Naive thymus-derived CD4-positive, alpha-beta T cell (primary cell): ENCODE measurements at regions of chr1 and their contacts with region 1.

Region 1: GRCh38 chr1:23098463-23099170 is 70.0 kb downstream of the LUZP1 start:
- DNase-seq: peak; percentile 28 to 71 (median 60)
- ATAC-seq: peak; percentile 79
- H3K4me3 ChIP-seq: no peak overlapping the region
- H3K4me3 Mint-ChIP-seq: peak overlapping the region in 5 of 10 donors; percentile 8 to 63 (median 29)
- H3K27ac ChIP-seq: no peak overlapping the region
- H3K27ac Mint-ChIP-seq: peak overlapping the region in 2 of 9 donors; percentile 14 to 36
- H3K4me1 ChIP-seq: peaks cover 20 to 30% of the 10 kb centered on the region in 2 donors
- H3K4me1 Mint-ChIP-seq: peaks cover 30 to 49% (median 34%) of the 10 kb centered on the region in 7 donors
- H3K27me3 ChIP-seq: no peaks in the 10 kb centered on the region
- H3K27me3 Mint-ChIP-seq: no peaks in the 10 kb centered on the region

Region 2: GRCh38 chr1:22976461-22977243 is 122.0 kb before region 1 on chr1:
- CTCF ChIA-PET with region 1: no interaction called
- POLR2A ChIA-PET with region 1: no interaction called
- intact Hi-C with region 1: loop called (anchors 1 kb)
- DNase-seq: peak in 8 of 9 donors; percentile 11 to 46 (median 38)
- ATAC-seq: peak; percentile 95
- H3K4me3 ChIP-seq: no peak overlapping the region
- H3K4me3 Mint-ChIP-seq: no peak overlapping the region
- H3K27ac ChIP-seq: no peak overlapping the region
- H3K27ac Mint-ChIP-seq: peak overlapping the region in 1 of 9 donors; percentile 72
- H3K4me1 ChIP-seq: no peaks in the 10 kb centered on the region
- H3K4me1 Mint-ChIP-seq: peaks cover 0 to 3% (median 0%) of the 10 kb centered on the region in 7 donors
- H3K27me3 ChIP-seq: no peaks in the 10 kb centered on the region
- H3K27me3 Mint-ChIP-seq: peaks cover 20 to 39% (median 22%) of the 10 kb centered on the region in 5 donors

Region 3: GRCh38 chr1:23118957-23119792 is 20.6 kb after region 1 on chr1:
- CTCF ChIA-PET with region 1: interaction called, 7 read pairs
- POLR2A ChIA-PET with region 1: no interaction called
- intact Hi-C with region 1: loop called (anchors 2 kb)
- DNase-seq: peak in 6 of 9 donors; percentile 8 to 49 (median 33)
- ATAC-seq: peak; percentile 89
- H3K4me3 ChIP-seq: peak overlapping the region; percentile 7
- H3K4me3 Mint-ChIP-seq: peak overlapping the region; percentile 40 to 81 (median 69)
- H3K27ac ChIP-seq: peak overlapping the region; percentile 36
- H3K27ac Mint-ChIP-seq: peak overlapping the region; percentile 23 to 89 (median 81)
- H3K4me1 ChIP-seq: peaks cover 22 to 30% of the 10 kb centered on the region in 2 donors
- H3K4me1 Mint-ChIP-seq: peaks cover 38 to 79% (median 60%) of the 10 kb centered on the region in 7 donors
- H3K27me3 ChIP-seq: no peaks in the 10 kb centered on the region
- H3K27me3 Mint-ChIP-seq: no peaks in the 10 kb centered on the region

Region 4: DNA sequence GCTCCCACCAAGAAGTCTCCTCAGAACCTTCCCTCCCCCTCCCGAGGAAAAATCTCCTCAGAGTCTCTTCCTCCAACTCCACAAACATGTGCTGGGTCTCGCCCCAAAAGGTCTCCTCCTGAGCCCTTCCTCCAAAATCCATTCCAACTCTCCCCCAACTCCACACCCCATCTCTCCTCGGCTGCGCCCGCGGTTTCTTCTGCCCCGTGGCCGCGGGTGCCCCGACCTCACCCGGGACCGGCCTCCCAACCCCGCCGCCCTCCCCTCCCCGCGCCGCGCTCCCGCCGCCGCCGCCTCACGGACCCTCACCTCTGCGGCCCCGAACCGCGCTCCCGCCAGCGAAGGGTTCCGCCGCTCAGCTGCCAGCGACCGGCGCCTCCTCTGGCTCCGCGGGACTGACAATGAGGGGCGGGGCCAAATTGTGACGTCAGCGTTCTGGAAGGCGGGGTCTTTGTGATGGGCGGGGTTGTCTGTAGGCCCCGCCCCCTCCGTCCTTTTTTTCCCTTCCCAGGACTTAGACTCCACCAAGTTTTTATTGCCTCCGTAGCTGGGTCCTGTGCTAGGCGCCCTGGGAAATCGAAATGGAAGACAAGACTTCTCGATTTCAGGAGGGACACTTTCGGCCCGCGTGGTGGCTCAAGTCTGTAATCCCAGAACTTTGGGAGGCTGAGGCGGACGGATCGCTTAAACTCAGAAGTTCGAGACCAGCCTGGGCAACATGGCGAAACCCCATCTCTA is 70.0 kb after region 1 on chr1 and contains the start of gene LUZP1:
- CTCF ChIA-PET with region 1: interaction called, 7 read pairs
- POLR2A ChIA-PET with region 1: interaction called, 6 read pairs
- intact Hi-C with region 1: loop called (anchors 1 to 5 kb)
- DNase-seq: peak; percentile 73 to 91 (median 84)
- ATAC-seq: peak; percentile 96
- H3K4me3 ChIP-seq: peak within 1 kb of the TSS; percentile 90
- H3K4me3 Mint-ChIP-seq: peak within 1 kb of the TSS; percentile 84 to 99 (median 96)
- H3K27ac ChIP-seq: peak within 1 kb of the TSS; percentile 84
- H3K27ac Mint-ChIP-seq: peak within 1 kb of the TSS; percentile 57 to 94 (median 87)
- H3K4me1 ChIP-seq: peaks cover 7 to 16% of the 10 kb centered on the region in 2 donors
- H3K4me1 Mint-ChIP-seq: peaks cover 18 to 48% (median 38%) of the 10 kb centered on the region in 7 donors
- H3K27me3 ChIP-seq: no peaks in the 10 kb centered on the region
- H3K27me3 Mint-ChIP-seq: peaks cover 0 to 4% (median 0%) of the 10 kb centered on the region in 5 donors
- total RNA-seq, gene LUZP1: 14.8 to 22.9 (median 16.9) TPM

Region 5: DNA sequence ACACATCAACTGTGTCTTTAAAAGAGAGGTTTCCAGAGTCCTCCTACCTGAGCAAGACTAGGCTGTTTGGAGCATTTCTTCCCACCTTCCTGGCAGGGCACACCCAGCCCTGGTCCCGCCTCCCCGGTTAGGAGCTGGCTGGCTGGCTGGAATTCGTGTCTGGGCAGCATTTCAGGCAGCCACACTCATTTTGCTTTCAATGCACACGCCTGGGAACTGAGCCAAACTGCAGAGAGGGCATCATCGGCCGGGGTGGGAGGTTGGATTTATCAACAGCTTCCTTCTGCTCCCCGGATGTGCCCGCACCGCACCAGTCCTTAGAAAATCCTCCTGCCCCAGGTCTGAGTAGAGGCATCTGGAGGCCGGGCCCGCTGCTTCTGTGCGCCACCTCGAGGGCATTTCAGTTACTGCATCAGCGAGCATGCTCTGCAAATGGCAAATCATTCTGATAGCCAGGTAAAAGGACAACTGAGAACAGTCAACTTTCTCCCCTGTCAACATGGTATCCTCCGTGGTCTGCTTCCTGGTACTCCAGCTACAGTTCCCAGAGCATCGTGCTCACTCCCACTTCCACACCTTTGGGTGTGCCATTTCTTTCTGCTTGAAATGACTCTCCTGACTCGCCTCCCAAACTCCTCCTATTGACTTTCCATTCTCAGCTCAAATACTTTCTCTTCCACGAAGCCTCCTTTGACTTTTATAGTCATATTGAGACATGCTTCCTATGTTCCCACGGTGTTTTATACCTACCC is 305.3 kb after region 1 on chr1:
- CTCF ChIA-PET with region 1: no interaction called
- POLR2A ChIA-PET with region 1: no interaction called
- intact Hi-C with region 1: loop called in 1 of 2 experiments (anchors 10 kb)
- DNase-seq: peak; percentile 62 to 83 (median 73)
- ATAC-seq: peak; percentile 92
- H3K4me3 ChIP-seq: no peak overlapping the region
- H3K4me3 Mint-ChIP-seq: no peak overlapping the region
- H3K27ac ChIP-seq: no peak overlapping the region
- H3K27ac Mint-ChIP-seq: peak overlapping the region in 5 of 9 donors; percentile 16 to 76 (median 51)
- H3K4me1 ChIP-seq: peaks cover 4 to 9% of the 10 kb centered on the region in 2 donors
- H3K4me1 Mint-ChIP-seq: peaks cover 10 to 14% (median 12%) of the 10 kb centered on the region in 7 donors
- H3K27me3 ChIP-seq: no peaks in the 10 kb centered on the region
- H3K27me3 Mint-ChIP-seq: no peaks in the 10 kb centered on the region

Region 6: DNA sequence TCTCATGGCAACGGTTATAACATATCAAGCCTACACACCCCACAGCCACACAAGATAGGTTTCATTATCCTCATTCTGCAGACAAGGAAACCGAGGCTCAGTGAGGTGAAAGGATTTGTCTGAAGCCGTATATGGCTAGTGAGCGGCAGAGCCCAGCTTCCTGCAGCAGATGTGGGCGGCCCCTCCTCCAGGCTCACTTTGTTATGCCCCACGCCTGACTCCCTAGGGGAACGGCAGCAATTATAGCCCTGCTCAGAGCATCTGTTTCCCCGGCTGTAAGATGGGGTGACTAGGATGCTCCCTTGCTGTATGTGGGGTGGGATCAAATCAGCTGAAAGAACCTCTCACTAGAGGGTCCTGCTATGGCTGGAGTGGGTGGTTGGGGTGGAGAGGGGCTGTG is 1242.6 kb after region 1 on chr1:
- CTCF ChIA-PET with region 1: no interaction called
- POLR2A ChIA-PET with region 1: no interaction called
- intact Hi-C with region 1: no loop called
- DNase-seq: no peak
- ATAC-seq: no peak
- H3K4me3 ChIP-seq: no peak overlapping the region
- H3K4me3 Mint-ChIP-seq: no peak overlapping the region
- H3K27ac ChIP-seq: no peak overlapping the region
- H3K27ac Mint-ChIP-seq: no peak overlapping the region
- H3K4me1 ChIP-seq: no peaks in the 10 kb centered on the region
- H3K4me1 Mint-ChIP-seq: peaks cover 0 to 8% (median 0%) of the 10 kb centered on the region in 7 donors
- H3K27me3 ChIP-seq: no peaks in the 10 kb centered on the region
- H3K27me3 Mint-ChIP-seq: peaks cover 0 to 23% (median 0%) of the 10 kb centered on the region in 5 donors